Endothelial cell of umbilical vein (primary cell): ENCODE measurements at regions of chr11 and their contacts with region 1.

Region 1: DNA sequence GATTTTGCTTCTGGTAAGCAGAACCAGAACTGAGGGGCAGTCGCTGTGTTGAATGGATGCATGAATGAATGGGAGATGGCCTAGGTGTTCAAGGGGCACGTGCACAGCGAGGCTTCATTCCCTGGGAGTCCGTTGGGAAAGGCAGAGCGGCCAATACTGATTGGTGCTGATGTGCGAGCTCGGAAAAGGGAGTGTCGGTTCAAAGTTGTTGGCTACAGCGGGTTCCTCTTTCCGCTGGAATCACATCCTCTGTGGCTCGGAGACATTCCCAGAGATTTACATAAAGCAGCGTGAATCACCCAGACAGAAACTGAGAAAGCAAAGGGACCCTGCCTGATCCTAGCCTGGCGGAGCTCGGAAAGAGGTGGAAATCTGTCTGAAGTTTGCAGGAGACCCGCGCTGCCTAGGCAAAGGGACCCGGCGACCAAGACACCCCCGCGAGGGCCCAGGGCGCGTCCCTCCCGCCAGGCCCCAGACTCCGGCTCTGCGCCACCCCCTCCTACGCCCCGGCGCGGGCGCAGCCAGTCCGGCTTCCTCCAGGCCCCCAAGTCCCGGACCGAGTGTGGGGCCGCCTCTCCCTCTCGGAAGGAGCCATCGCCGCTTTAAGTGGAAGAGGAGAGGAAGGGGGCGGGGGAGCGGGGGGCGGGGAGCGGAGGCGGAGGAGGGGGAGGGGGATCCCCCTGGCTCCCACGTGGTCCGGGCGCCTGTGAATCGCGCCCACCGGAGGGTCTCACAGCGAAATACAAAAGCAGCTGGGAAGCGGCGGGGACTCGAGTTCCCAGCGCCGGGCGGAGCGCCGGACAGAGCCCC is at the start of gene FJX1:
- DNase-seq: peak; percentile 83
- H3K4me3 ChIP-seq: peak within 1 kb of the TSS; percentile 54 to 75 (median 62)
- H3K27ac ChIP-seq: peak within 1 kb of the TSS; percentile 92
- H3K4me1 ChIP-seq: peaks cover 32% of the 10 kb centered on the region
- H3K27me3 ChIP-seq: peaks cover 3 to 18% of the 10 kb centered on the region in 2 experiments
- CTCF ChIP-seq: no peak
- POLR2A ChIP-seq: peak; percentile 32
- total RNA-seq, gene FJX1: 23.7 and 26.6 TPM in 2 replicates

Region 2: DNA sequence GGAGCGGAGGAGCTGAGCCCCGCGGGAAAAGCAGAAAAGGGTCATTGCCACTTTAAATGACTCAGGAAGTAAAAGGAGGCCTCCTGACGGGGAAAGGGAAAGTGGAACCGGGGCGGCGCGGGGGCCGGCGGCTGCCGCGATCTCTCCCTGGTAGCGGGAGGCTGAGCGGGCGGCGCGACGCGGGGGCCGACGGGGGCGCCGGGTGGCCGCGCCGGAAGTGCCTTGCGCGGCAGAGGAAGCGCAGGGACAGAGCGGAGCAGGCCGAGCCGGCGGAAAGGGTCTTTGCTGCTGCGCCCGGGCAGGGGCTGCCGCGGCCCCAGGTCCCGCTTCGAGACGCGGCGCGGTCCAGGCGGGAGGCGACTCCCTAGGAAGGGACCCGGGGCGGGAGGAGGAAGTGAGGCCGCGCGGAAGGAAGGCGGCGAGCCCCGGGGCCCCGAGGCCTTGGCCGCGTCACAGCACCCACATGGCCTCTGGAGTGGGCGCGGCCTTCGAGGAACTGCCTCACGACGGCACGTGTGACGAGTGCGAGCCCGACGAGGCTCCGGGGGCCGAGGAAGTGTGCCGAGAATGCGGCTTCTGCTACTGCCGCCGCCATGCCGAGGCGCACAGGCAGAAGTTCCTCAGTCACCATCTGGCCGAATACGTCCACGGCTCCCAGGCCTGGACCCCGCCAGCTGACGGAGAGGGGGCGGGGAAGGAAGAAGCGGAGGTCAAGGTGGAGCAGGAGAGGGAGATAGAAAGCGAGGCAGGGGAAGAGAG is 44.9 kb after region 1 on chr11 and contains the start of gene TRIM44:
- CTCF ChIA-PET with region 1: interaction called, 5 read pairs
- POLR2A ChIA-PET with region 1: interaction called, 3 read pairs
- dilution Hi-C with region 1: no loop called
- intact Hi-C with region 1: loop called (anchors 1 kb)
- DNase-seq: peak; percentile 82
- H3K4me3 ChIP-seq: peak within 1 kb of the TSS; percentile 47 to 59 (median 59)
- H3K27ac ChIP-seq: peak within 1 kb of the TSS; percentile 67
- H3K4me1 ChIP-seq: peaks cover 29% of the 10 kb centered on the region
- H3K27me3 ChIP-seq: no peaks in the 10 kb centered on the region
- CTCF ChIP-seq: no peak
- POLR2A ChIP-seq: peak; percentile 45
- total RNA-seq, gene TRIM44: 62.3 and 72.0 TPM in 2 replicates

Region 3: DNA sequence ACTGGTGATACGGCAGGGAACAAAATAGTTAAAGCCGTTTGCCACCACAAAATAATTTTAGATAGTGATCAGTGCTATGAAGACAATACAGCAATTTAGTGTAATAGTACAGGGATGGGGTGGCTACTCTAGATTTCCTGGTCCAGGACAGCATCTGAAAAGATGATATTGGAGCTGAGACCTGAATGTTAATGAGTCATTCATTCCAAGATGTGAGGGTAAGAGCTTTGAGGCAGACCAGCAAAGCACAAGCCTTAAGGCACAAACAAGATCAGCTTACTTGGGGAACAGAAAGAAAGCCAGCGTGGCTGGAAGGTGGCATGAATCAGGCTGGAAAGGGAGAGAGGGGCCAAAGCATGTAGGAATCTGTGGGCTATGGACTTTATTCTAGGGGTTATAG is 177.0 kb after region 1 on chr11:
- CTCF ChIA-PET with region 1: interaction called, 3 read pairs
- POLR2A ChIA-PET with region 1: no interaction called
- dilution Hi-C with region 1: no loop called
- intact Hi-C with region 1: loop called (anchors 1 kb)
- DNase-seq: no peak
- H3K4me3 ChIP-seq: no peak overlapping the region
- H3K27ac ChIP-seq: no peak overlapping the region
- H3K4me1 ChIP-seq: peaks cover 45% of the 10 kb centered on the region
- H3K27me3 ChIP-seq: no peaks in the 10 kb centered on the region
- CTCF ChIP-seq: no peak
- POLR2A ChIP-seq: no peak

Region 4: GRCh38 chr11:35852056-35852455 is 234.2 kb after region 1 on chr11:
- CTCF ChIA-PET with region 1: no interaction called
- POLR2A ChIA-PET with region 1: no interaction called
- dilution Hi-C with region 1: no loop called
- intact Hi-C with region 1: no loop called
- DNase-seq: peak; percentile 78
- H3K4me3 ChIP-seq: no peak overlapping the region
- H3K27ac ChIP-seq: no peak overlapping the region
- H3K4me1 ChIP-seq: peaks cover 15% of the 10 kb centered on the region
- H3K27me3 ChIP-seq: peaks cover 4 to 11% of the 10 kb centered on the region in 2 experiments
- CTCF ChIP-seq: no peak
- POLR2A ChIP-seq: no peak

Region 5: DNA sequence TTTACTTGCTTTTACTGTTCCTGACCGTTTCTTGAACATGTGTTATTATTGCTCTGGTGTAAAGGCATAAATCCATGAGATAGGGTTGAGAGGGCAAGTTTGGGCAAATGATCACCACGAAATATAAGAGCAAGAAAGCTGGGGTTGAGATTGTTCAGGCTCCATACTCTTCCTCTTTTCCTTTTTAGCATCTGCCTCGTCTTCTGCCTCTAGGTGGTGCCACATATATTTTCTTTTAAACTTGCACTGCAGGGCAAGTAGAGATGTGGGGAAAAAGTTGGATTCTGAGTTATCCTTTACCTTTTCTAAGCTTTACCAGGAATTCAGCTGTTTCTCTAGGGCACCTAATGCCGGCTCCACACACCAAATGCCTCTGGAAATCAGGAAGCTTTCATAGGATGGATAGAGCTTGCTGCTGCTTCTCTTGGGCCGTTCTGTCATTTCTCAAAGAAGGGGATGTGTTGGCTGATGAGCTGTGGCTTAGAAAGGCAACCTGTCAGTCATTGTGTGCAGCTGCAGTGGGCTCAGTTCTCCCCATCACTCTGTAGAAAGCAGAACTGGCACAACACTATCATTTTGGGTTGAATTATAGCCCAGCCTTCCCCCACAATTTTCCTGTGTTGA is 424.2 kb after region 1 on chr11:
- CTCF ChIA-PET with region 1: interaction called, 3 read pairs
- POLR2A ChIA-PET with region 1: no interaction called
- dilution Hi-C with region 1: no loop called
- intact Hi-C with region 1: loop called (anchors 5 kb)
- DNase-seq: peak; percentile 29
- H3K4me3 ChIP-seq: no peak overlapping the region
- H3K27ac ChIP-seq: no peak overlapping the region
- H3K4me1 ChIP-seq: no peaks in the 10 kb centered on the region
- H3K27me3 ChIP-seq: no peaks in the 10 kb centered on the region
- CTCF ChIP-seq: peak; percentile 44 to 45
- POLR2A ChIP-seq: no peak

Region 6: DNA sequence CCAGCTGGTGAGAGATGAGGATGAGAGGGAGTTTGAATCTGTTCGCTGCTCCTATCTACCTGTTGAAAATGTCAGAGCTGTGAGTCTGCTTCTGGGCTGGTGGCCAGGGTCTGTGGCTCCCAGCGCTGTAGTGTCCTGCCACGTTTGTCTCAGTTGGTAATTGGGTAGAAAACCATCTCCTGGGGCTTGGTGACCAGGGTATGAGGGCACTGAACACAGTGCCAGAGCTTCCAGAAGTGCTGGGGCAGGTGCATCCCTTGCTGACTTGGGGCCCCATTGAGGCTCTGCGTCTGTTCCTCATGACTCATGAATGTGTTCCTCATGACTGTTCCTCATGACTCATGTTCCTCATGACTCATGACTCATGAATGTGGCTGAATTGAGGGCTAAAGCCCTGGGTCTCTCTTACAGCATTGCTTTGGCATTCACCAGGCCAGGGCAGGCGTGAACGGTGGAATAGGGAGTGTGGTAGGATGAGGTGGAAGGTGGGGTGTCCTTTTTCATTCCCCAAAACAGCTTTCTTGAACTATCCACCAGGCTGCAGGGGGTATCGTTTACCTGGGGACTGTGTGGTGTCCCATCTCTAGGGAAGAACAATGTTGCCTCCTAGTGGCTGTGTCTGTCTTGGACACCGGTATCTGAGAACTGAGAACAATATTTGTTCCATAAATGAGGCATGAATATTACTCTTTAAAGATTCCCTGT is 531.8 kb after region 1 on chr11:
- CTCF ChIA-PET with region 1: interaction called, 11 read pairs
- POLR2A ChIA-PET with region 1: no interaction called
- dilution Hi-C with region 1: no loop called
- intact Hi-C with region 1: loop called (anchors 1 kb)
- DNase-seq: peak; percentile 99
- H3K4me3 ChIP-seq: no peak overlapping the region
- H3K27ac ChIP-seq: peak overlapping the region; percentile 93
- H3K4me1 ChIP-seq: peaks cover 25% of the 10 kb centered on the region
- H3K27me3 ChIP-seq: no peaks in the 10 kb centered on the region
- CTCF ChIP-seq: peak; percentile 43 to 50
- POLR2A ChIP-seq: peak; percentile 64

Region 7: DNA sequence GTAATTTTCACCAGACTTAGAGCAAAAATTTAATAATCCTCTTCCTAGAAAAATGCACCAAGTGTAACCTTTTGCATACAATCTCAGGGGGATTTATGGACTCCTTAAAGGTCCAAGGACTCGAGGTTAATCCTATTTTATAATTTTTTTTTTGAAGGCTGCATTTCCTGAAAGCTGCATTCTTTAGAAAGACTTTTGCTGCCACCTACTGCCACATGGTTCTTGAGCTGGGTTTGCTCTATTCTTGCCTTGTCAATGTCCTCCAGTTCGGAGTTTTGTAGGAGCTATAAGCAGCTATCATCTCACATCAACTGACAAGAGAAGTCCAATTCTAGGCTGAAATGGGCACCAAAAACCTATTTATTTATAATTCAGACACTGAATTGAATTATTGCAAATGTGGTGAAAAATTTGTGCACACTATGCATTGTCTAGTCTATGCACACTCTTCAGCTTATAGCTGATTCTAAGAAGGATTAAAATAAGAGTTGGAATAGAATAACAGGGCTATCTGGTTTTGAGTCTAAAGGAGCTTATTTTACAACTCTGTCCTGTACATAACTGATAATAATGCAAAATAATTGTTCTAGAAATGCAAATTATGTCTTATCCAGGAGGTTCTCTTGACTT is 860.9 kb after region 1 on chr11:
- CTCF ChIA-PET with region 1: interaction called, 4 read pairs
- POLR2A ChIA-PET with region 1: no interaction called
- dilution Hi-C with region 1: no loop called
- intact Hi-C with region 1: loop called (anchors 5 kb)
- DNase-seq: peak; percentile 60
- H3K4me3 ChIP-seq: no peak overlapping the region
- H3K27ac ChIP-seq: no peak overlapping the region
- H3K4me1 ChIP-seq: no peaks in the 10 kb centered on the region
- H3K27me3 ChIP-seq: no peaks in the 10 kb centered on the region
- CTCF ChIP-seq: peak; percentile 47 to 50
- POLR2A ChIP-seq: no peak